Activated naive CD4-positive, alpha-beta T cell treated with anti-CD3 and anti-CD28 coated beads for 36 hours (primary cell): ENCODE measurements at regions of chr10 and their contacts with region 1.

Region 1: DNA sequence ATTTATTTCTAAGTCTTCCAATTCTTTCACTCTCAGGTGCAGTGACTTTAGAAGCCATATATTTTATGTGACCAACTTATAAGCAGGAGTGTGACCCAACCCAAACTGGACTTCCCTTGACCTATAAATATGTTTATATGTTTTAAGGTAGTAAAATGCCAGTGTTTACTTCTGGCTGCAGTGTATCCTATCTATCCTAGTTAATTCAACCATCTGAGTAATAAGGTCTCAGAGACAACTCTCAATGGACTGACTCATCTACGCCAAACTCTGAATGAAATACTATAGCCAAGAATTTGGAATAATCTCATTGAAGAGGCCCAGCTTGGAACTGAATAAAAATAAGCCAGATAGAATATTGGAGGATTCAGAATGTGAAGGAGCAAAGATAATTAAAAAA is 544.5 kb upstream of the SORCS1 start:
- DNase-seq: no peak
- H3K4me3 Mint-ChIP-seq: no peak overlapping the region
- H3K27ac Mint-ChIP-seq: no peak overlapping the region
- H3K4me1 Mint-ChIP-seq: no peaks in the 10 kb centered on the region
- H3K27me3 Mint-ChIP-seq: no peaks in the 10 kb centered on the region

Region 2: DNA sequence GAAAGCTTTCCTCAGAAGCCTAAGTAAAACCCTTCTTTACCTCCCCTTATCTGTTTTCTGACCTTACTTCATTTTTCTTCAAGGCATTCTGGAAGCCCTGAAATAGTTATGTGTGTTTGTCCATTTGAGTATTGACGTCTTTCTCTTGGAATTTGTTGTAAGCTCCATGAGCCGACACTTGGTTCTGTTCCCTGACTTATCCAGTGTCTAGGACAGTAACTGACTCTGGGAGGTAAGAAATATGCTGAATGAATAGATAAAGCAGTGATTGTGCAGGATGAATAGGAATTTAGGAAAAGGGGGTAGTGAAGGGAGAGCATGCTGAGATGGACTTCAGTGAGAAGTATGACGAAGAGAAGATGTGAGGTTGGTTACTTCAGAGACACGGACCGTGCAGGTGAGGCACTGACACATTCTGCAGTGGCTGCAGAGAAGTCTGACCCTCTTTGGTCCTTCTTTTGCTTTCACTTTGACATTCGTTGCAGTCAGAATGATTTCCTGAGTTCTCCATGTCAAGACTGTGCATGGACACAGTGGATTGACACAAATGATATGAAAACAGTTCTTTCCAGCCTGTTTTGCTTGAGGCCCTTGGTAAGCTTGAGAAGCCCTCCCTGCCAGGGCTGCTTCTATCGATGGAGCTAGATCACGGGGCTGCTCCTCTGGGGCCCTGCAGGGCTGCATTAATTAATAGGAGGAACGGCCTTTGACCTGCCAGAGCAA is 283.0 kb before region 1 on chr10:
- CTCF ChIA-PET with region 1: no interaction called
- intact Hi-C with region 1: no loop called
- DNase-seq: no peak
- H3K4me3 Mint-ChIP-seq: no peak overlapping the region
- H3K27ac Mint-ChIP-seq: no peak overlapping the region
- H3K4me1 Mint-ChIP-seq: no peaks in the 10 kb centered on the region
- H3K27me3 Mint-ChIP-seq: no peaks in the 10 kb centered on the region

Region 3: GRCh38 chr10:107733328-107734130 is 24.5 kb after region 1 on chr10:
- CTCF ChIA-PET with region 1: no interaction called
- intact Hi-C with region 1: loop called (anchors 1 kb)
- DNase-seq: no peak
- H3K4me3 Mint-ChIP-seq: no peak overlapping the region
- H3K27ac Mint-ChIP-seq: no peak overlapping the region
- H3K4me1 Mint-ChIP-seq: no peaks in the 10 kb centered on the region
- H3K27me3 Mint-ChIP-seq: no peaks in the 10 kb centered on the region